Activated CD8-positive, alpha-beta T cell treated with anti-CD3 and anti-CD28 coated beads, Interleukin-2, amount 10 ng/mL, durations not matched to agents 7 days and 5 days (primary cell): ENCODE measurements at regions of chr11 and their contacts with region 1.

Region 1: GRCh38 chr11:117143871-117144476 is at the start of gene PAFAH1B2:
- DNase-seq: peak; percentile 97
- ATAC-seq: peak; percentile 95
- H3K4me3 Mint-ChIP-seq: peak within 1 kb of the TSS; percentile 92
- H3K27ac Mint-ChIP-seq: peak within 1 kb of the TSS; percentile 92
- H3K4me1 Mint-ChIP-seq: peaks cover 42% of the 10 kb centered on the region
- H3K27me3 Mint-ChIP-seq: peaks cover 21% of the 10 kb centered on the region
- total RNA-seq, gene PAFAH1B2: 56.5 to 60.0 TPM

Region 2: DNA sequence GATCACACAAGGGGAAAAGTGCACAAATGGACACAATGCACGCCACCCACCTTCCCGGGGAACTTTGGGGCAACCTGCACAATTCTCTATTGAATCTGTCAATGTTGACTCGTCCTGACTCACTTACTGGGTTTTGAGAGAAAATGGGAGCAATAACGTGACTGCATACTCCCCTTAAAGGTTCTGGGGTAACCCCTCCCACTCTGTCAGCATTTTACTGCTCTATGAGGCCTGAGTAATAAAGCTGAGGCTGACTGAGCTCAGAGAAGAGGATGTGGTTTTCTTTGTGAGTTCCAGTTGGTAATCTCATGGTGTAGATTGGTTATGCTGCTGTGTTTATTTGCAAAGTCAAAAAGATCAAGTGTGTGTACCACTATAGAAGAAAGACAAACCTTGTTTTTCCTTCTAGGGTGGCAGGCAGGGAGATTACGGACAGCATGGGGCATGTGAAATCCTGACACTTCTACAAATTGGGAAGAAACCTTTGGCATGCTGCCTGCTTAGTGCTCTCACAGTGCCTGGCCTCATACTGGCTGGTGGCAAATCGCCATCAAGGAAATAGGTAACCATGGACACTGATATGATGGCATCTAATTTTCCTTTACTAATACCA is 290.4 kb before region 1 on chr11:
- CTCF ChIA-PET with region 1: interaction called, 4 read pairs
- POLR2A ChIA-PET with region 1: interaction called, 10 read pairs
- DNase-seq: peak; percentile 83
- ATAC-seq: peak; percentile 95
- H3K4me3 Mint-ChIP-seq: peak overlapping the region; percentile 35
- H3K27ac Mint-ChIP-seq: peak overlapping the region; percentile 93
- H3K4me1 Mint-ChIP-seq: peaks cover 65% of the 10 kb centered on the region
- H3K27me3 Mint-ChIP-seq: no peaks in the 10 kb centered on the region

Region 3: GRCh38 chr11:117076941-117077691 is 66.9 kb before region 1 on chr11:
- CTCF ChIA-PET with region 1: no interaction called
- POLR2A ChIA-PET with region 1: no interaction called
- DNase-seq: no peak
- ATAC-seq: no peak
- H3K4me3 Mint-ChIP-seq: no peak overlapping the region
- H3K27ac Mint-ChIP-seq: no peak overlapping the region
- H3K4me1 Mint-ChIP-seq: peaks cover 36% of the 10 kb centered on the region
- H3K27me3 Mint-ChIP-seq: no peaks in the 10 kb centered on the region

Region 4: DNA sequence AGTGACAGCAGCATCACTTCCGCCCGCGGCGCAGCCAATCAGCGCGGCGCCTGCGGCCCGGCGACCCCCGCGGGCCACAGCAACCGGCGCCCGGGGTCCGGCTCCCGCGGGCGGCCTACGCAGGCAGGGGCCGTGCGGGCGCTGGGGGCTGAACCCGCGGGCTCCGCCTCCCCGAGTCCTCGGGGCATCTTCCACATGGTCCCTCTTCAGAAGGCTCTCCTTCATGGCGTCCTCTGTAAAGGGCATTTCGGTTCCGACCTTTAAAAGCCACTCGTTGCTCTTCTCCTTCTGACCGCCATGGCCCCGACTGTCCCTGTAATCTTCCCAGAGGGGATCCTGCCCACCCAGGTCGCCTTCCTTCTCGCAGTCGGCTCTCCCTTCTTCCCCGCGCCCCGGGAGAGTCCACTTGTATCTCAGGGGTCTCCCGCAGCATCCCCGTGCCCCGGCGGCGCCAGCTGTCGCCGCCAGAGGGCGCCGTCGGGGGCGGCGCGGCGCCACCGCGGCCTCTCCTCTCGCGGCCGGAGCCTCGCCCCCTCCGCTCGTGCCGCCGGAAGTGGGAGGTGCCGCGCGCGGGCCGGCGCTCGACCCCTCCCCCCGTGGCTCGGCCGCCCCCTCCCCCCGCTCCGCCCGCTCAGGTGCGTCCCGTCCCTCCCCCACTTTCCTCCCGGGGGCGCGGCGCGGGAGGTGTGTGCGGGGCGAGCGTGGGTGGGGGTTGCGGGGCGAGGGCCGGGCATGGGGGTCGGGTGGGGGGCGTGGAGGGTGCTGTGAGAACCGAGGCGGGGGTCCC is 88.3 kb after region 1 on chr11 and contains the start of gene RNF214:
- CTCF ChIA-PET with region 1: interaction called, 12 read pairs
- POLR2A ChIA-PET with region 1: interaction called, 13 read pairs
- DNase-seq: peak; percentile 79
- ATAC-seq: peak; percentile 77
- H3K4me3 Mint-ChIP-seq: peak within 1 kb of the TSS; percentile 89
- H3K27ac Mint-ChIP-seq: peak within 1 kb of the TSS; percentile 97
- H3K4me1 Mint-ChIP-seq: peaks cover 43% of the 10 kb centered on the region
- H3K27me3 Mint-ChIP-seq: no peaks in the 10 kb centered on the region
- total RNA-seq, gene RNF214: 19.5 to 21.2 TPM

Region 5: DNA sequence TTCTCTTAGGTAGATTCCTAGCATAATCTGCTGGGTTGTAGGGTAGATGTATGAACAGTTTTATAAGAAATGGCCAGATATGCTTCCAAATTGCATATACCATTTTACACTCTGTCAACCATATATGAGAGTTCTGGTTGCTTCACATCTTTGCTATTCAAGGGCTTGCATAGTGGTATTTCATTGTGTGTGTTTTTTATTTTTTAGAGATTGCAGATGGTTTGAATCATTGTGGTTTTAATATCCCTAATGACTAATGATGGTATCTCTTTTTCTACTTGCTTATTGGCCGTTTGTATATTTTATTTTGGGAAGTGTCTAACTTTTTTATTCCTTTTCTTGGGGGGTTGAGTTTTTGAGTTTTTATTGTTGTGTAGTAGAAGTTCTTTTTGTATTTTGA is 115.4 kb after region 1 on chr11:
- CTCF ChIA-PET with region 1: no interaction called
- POLR2A ChIA-PET with region 1: no interaction called
- DNase-seq: no peak
- ATAC-seq: no peak
- H3K4me3 Mint-ChIP-seq: no peak overlapping the region
- H3K27ac Mint-ChIP-seq: no peak overlapping the region
- H3K4me1 Mint-ChIP-seq: no peaks in the 10 kb centered on the region
- H3K27me3 Mint-ChIP-seq: no peaks in the 10 kb centered on the region